Dendritic cell treated with granulocyte-macrophage colony-stimulating factor and Interleukin-4, amounts not matched to agents 40 ng/mL and 50 ng/mL, for 4 days (primary cell): ENCODE measurements at regions of chr18 and their contacts with region 1.

Region 1: GRCh38 chr18:25490316-25490715 is 138.3 kb upstream of the ZNF521 start:
- H3K4me3 Mint-ChIP-seq: no peak overlapping the region
- H3K27ac Mint-ChIP-seq: no peak overlapping the region
- H3K4me1 Mint-ChIP-seq: no peaks in the 10 kb centered on the region
- H3K27me3 Mint-ChIP-seq: no peaks in the 10 kb centered on the region

Region 2: GRCh38 chr18:25420077-25420825 is 70.1 kb before region 1 on chr18:
- intact Hi-C with region 1: loop called (anchors 10 kb)
- H3K4me3 Mint-ChIP-seq: no peak overlapping the region
- H3K27ac Mint-ChIP-seq: no peak overlapping the region
- H3K4me1 Mint-ChIP-seq: no peaks in the 10 kb centered on the region
- H3K27me3 Mint-ChIP-seq: no peaks in the 10 kb centered on the region

Region 3: GRCh38 chr18:25795213-25795612 is 304.9 kb after region 1 on chr18:
- intact Hi-C with region 1: no loop called
- H3K4me3 Mint-ChIP-seq: no peak overlapping the region
- H3K27ac Mint-ChIP-seq: no peak overlapping the region
- H3K4me1 Mint-ChIP-seq: no peaks in the 10 kb centered on the region
- H3K27me3 Mint-ChIP-seq: no peaks in the 10 kb centered on the region